Activated T-helper 1 cell treated with anti-CD3 and anti-CD28 coated beads, Interleukin-12 subunit alpha, Interleukin-12 subunit beta, Interleukin-2, Interleukin-4 antibody, amounts not matched to agents 30 ng/mL and 10 ng/mL and 1 ng/mL, durations not matched to agents 14 hours and 24 hours and 36 hours (primary cell): ENCODE measurements at regions of chr13 and their contacts with region 1.

Region 1: DNA sequence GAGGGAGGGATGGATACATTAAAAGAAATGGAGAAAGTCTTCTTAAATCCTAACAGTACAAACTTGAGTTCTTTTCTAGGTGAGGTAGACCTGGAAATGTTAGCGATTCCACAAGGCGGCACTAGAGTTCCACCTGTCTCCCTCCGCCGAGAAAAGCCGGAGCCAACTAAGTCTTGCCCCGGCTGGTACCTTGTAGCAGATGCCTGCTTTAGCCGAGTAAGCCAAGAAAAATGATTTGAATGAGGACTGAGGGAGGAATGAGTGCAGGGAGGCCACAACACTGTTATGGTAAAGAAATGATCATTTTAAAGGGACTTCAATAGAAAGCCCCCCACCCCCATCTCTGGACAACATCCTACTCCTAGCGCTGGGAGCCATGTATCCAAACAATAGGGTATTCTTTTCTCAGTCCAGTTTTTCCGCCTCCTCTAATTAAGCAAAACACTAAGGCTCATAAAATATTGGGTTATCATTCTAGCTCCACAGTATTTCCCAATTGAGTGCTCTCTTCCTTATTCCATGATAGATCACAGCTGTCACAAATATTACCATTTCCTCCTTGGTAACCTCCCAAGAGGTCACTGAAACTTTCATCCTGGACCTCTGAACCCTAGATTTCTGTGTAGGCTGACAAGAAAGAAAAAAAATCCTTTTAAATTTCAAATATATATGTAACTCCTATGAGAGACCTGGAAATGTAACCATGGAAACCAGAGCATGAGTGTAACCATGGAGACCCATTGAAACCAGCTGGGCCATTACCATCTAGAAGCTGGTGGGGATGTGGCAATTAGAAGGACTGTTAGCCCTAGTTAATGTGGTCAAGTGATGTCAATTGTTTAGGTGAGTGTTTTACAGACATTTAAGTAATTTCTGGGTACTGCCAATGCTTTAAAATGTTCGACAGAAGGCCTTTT is 58.3 kb downstream of the GPALPP1 start:
- DNase-seq: peak; percentile 61
- H3K4me3 Mint-ChIP-seq: peak overlapping the region; percentile 76
- H3K27ac Mint-ChIP-seq: no peak overlapping the region
- H3K4me1 Mint-ChIP-seq: peaks cover 16% of the 10 kb centered on the region
- H3K27me3 Mint-ChIP-seq: peaks cover 33% of the 10 kb centered on the region

Region 2: DNA sequence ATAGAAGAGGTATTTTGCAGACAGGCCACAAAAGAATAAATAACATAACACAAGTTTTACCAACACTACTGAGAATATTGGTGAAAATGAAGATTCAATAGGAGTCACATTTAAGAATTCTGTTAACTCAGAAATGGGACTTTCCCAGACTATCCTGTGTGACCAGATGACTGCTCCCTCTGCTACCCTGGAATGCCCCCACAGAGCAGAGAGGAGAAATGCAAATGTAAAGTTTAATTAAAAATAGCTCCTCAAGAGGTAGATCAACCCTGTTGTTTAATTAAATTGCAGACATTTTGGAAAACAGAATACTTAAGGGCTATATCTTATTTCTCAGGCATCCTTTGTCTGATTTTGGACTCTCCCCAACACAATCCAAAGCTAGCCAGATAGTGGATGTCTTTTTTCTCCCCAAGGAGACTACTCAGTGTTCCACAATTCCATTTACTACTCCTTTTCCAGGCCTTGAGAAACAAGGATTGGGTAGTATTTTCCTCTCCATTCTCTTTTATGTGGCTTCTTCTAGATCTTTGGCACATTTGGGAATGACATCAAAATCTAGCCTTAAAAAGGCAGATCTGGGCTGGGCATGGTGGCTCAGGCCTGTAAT is 366.8 kb before region 1 on chr13:
- intact Hi-C with region 1: no loop called
- DNase-seq: no peak
- H3K4me3 Mint-ChIP-seq: no peak overlapping the region
- H3K27ac Mint-ChIP-seq: no peak overlapping the region
- H3K4me1 Mint-ChIP-seq: peaks cover 8% of the 10 kb centered on the region
- H3K27me3 Mint-ChIP-seq: peaks cover 1% of the 10 kb centered on the region

Region 3: GRCh38 chr13:45036206-45036605 is 11.4 kb before region 1 on chr13:
- intact Hi-C with region 1: no loop called
- DNase-seq: no peak
- H3K4me3 Mint-ChIP-seq: no peak overlapping the region
- H3K27ac Mint-ChIP-seq: no peak overlapping the region
- H3K4me1 Mint-ChIP-seq: peaks cover 4% of the 10 kb centered on the region
- H3K27me3 Mint-ChIP-seq: no peaks in the 10 kb centered on the region

Region 4: DNA sequence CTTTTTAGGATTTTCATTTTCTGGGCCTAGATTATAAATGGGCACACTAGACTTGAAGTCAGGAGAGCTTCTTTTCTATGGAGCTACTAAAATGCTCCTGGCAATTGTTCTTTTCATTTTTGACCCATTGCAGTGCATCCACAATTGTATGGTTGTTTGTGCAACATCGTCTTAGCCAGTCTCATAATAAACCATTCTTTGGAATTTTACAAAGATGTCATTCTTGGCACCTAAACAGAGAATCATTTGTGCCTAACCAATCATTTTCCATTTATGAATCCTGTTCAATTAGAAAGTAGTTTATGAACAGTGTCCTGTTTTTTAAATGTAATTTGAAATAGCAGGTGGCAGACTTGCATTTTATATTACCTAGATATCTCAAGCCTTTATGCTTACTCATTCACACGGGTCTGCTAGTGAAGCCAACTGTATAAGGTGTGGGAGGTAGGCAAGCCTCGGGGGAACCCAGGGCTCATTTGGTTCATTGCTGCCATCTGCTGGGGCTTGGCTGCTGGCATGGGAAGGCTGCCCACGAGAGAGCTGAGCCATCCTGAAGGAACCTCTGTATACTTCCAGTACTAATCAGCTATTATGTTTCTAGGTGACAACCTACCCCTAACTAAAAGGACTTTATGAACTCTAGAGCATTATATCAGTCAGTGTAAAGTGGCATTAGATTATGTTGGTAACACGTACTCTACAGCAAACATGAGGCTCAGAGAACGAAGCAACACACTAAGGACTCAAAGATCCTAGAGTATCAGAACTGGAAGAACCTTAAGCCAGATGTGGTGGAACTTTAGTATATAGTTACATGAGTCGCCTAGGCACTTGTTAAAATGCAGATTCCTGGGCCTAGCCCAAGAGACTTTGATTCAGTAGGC is 233.3 kb after region 1 on chr13:
- intact Hi-C with region 1: loop called (anchors 1 kb)
- DNase-seq: peak; percentile 3
- H3K4me3 Mint-ChIP-seq: no peak overlapping the region
- H3K27ac Mint-ChIP-seq: no peak overlapping the region
- H3K4me1 Mint-ChIP-seq: peaks cover 15% of the 10 kb centered on the region
- H3K27me3 Mint-ChIP-seq: no peaks in the 10 kb centered on the region

Region 5: GRCh38 chr13:45310341-45311125 is 262.9 kb after region 1 on chr13:
- intact Hi-C with region 1: loop called (anchors 1 kb)
- DNase-seq: no peak
- H3K4me3 Mint-ChIP-seq: peak overlapping the region; percentile 78
- H3K27ac Mint-ChIP-seq: peak overlapping the region; percentile 44
- H3K4me1 Mint-ChIP-seq: peaks cover 18% of the 10 kb centered on the region
- H3K27me3 Mint-ChIP-seq: peaks cover 16% of the 10 kb centered on the region

Region 6: DNA sequence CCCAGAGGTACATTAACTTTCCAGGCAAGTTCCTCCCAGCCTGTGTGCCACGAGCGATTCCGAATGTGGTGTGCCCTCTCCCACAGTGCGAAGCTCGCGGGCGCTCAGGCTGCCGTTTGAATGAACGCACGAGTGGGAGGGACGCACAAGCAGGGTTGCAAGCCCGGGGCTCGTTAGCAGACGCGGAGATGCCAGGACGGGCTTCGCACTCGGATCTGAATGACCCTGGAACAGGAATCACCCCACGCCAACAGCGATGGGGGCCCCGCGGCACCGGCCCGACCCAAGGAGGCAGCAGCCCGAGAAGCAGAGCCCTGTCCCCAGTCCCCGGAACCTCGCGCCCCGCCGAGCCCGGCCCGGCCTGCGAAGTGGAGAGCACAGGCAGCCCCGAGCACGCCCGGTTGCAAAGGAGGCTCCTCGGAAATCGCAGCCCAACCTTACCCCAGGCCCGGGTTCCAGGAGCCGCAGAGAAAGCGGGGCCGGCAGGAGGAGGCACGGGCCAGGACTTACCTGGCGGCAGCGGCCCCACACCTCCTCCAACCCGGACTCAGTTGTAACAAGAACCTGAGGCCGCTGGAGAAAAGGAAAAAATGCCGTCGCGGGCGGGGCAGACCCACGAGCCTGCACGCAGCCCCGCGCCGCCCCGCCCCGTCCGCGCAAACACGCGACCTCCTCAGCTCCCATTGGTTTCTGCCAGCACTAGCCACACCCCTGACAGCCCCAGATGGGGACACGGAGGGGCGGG is 370.3 kb after region 1 on chr13 and contains the start of gene SLC25A30:
- intact Hi-C with region 1: loop called (anchors 5 kb)
- DNase-seq: peak; percentile 85
- H3K4me3 Mint-ChIP-seq: peak within 1 kb of the TSS; percentile 94
- H3K27ac Mint-ChIP-seq: peak within 1 kb of the TSS; percentile 92
- H3K4me1 Mint-ChIP-seq: peaks cover 18% of the 10 kb centered on the region
- H3K27me3 Mint-ChIP-seq: no peaks in the 10 kb centered on the region
- total RNA-seq, gene SLC25A30: 16.0 and 16.3 TPM in 2 replicates

Region 7: DNA sequence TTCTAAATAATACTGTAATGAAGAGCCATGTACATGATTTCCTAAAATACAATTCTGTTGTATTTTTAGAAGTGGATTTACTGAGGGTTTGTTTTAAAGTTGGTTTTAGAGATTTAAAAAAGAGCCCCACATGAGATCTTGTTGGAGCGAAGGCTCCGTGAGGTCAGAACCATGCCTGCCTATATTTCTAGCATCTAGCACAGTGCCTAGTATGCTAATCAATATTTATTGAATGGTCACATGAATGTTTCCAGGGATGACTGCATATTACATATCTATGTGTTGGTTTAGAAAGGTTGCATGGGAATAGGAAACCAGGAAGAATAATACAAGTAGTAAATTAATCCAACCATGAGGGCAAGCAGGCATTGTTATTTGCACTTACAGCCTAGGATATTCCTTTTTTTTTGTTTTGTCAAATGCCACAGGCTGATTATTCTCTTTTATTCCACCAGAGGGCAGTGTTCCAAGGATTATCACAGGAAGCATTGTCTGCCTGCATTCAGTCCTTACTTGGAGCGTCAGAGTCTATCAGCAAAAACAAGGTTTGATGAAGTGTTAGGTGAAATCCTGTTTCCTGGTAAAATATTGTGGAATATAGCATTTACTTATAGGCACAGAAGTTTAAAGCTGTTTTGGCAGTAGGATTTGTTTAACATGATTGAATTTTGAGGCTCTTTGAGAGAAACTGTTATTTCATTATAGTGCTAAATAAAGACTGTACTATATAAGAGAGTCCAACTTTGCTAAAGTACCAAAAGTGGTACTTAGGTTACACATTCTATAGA is 463.9 kb after region 1 on chr13:
- intact Hi-C with region 1: loop called (anchors 1 kb)
- DNase-seq: no peak
- H3K4me3 Mint-ChIP-seq: no peak overlapping the region
- H3K27ac Mint-ChIP-seq: no peak overlapping the region
- H3K4me1 Mint-ChIP-seq: peaks cover 9% of the 10 kb centered on the region
- H3K27me3 Mint-ChIP-seq: no peaks in the 10 kb centered on the region